Activated CD4-positive, alpha-beta memory T cell treated with anti-CD3 and anti-CD28 coated beads for 36 hours (primary cell): ENCODE measurements at regions of chr22 and their contacts with region 1.

Region 1: DNA sequence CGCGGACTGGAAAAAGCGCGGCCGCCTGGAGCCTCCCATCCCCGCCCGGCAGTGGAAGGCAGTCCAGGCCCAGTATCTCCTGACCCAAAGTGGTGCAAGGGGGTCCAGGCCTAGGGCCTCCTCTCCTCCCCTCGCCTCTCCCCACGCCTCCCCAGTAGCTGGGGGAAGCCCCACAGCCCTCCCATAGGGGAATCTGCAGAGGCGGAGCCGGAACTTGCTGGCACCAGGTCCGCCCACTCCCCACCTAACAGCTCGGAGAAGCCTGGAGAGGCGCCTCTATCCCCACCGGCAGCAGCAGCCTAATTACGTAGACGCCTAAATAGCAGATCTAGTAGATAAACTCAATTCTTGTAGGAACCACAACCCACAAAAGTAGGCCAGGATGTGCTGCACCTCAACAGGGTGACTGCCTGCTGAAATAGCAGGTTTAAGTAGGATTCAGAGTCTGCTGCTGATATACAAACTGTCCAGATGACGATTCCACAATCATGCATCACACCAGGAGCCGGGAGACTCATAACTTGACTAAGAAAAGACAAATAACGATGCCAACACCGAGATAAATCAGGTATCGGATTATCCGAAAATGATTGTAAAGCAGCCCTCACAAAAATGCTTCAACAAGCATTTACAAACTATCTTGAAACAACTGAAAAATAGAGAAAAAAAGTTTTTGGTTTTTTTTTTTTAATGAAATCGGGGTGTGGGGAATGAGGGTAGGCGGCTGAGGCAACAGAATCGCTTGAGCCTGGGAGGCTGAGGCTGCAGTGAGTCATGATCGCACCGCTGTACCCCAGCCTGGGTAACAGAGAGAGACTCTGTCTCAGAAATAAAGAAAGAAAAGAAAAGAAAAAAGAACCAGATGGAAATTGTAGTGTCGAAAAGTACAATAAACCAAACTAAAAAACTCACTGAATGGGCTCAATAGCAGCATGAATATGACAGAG is 11.4 kb upstream of the BRD1 start:
- DNase-seq: peak; percentile 93
- H3K4me3 Mint-ChIP-seq: peak overlapping the region; percentile 65
- H3K27ac Mint-ChIP-seq: peak overlapping the region; percentile 94
- H3K4me1 Mint-ChIP-seq: peaks cover 36% of the 10 kb centered on the region
- H3K27me3 Mint-ChIP-seq: no peaks in the 10 kb centered on the region

Region 2: GRCh38 chr22:49767355-49768062 is 71.5 kb before region 1 on chr22:
- CTCF ChIA-PET with region 1: no interaction called
- POLR2A ChIA-PET with region 1: no interaction called
- intact Hi-C with region 1: no loop called
- DNase-seq: peak; percentile 53
- H3K4me3 Mint-ChIP-seq: no peak overlapping the region
- H3K27ac Mint-ChIP-seq: peak overlapping the region; percentile 2
- H3K4me1 Mint-ChIP-seq: peaks cover 9% of the 10 kb centered on the region
- H3K27me3 Mint-ChIP-seq: no peaks in the 10 kb centered on the region

Region 3: GRCh38 chr22:49815641-49816071 is 23.4 kb before region 1 on chr22:
- CTCF ChIA-PET with region 1: interaction called, 3 read pairs
- POLR2A ChIA-PET with region 1: no interaction called
- intact Hi-C with region 1: loop called (anchors 2 kb)
- DNase-seq: peak; percentile 62
- H3K4me3 Mint-ChIP-seq: peak overlapping the region; percentile 26
- H3K27ac Mint-ChIP-seq: peak overlapping the region; percentile 54
- H3K4me1 Mint-ChIP-seq: peaks cover 71% of the 10 kb centered on the region
- H3K27me3 Mint-ChIP-seq: no peaks in the 10 kb centered on the region

Region 4: GRCh38 chr22:49852898-49853894 is 14.2 kb after region 1 on chr22 and contains the start of gene ZBED4:
- CTCF ChIA-PET with region 1: no interaction called
- POLR2A ChIA-PET with region 1: interaction called, 9 read pairs
- intact Hi-C with region 1: loop called (anchors 1 kb)
- DNase-seq: peak; percentile 99
- H3K4me3 Mint-ChIP-seq: peak within 1 kb of the TSS; percentile 86
- H3K27ac Mint-ChIP-seq: peak within 1 kb of the TSS; percentile 80
- H3K4me1 Mint-ChIP-seq: peaks cover 36% of the 10 kb centered on the region
- H3K27me3 Mint-ChIP-seq: peaks cover 3% of the 10 kb centered on the region
- total RNA-seq, gene ZBED4: 18.4 TPM

Region 5: DNA sequence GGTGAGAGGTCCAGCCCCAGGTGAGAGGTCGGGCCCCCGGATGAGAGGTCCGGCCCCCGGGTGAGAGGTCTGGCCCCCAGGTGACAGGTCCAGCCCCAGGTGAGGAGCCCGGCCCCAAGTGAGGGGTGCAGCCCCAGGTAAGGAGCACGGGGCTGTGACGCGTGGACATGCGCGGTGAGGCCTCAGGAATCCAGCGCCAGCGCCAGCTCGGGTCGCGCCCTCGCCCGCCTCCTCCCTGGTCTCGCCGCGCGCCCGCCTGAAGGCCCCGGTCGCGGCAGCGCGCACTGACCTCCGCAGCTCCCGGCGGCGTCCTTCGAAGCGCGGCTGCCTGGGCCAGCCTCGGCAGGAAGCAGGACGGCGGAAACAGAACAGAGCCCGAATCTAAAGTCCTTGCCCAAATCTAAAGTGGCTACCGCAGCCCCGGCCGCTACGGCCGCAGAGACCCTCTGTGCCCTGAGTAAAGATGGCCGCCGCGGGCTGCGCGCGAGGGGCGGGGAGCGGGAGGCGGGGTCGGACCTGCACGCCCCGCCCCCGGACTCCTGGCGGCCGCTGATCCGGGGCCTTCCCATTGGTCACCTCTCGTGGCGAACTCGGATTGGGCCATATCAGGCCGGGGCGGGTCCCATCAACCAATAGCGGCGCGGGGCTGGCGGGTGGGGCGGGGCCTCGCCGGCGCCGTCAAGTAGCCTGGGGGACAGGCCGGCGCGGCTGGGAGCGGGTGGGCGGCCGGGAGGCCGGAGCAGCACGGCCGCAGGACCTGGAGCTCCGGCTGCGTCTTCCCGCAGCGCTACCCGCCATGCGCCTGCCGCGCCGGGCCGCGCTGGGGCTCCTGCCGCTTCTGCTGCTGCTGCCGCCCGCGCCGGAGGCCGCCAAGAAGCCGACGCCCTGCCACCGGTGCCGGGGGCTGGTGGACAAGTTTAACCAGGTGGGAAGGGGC is 79.2 kb after region 1 on chr22 and contains the starts of genes ALG12 and CRELD2:
- CTCF ChIA-PET with region 1: no interaction called
- POLR2A ChIA-PET with region 1: no interaction called
- intact Hi-C with region 1: loop called (anchors 5 kb)
- DNase-seq: peak; percentile 98
- H3K4me3 Mint-ChIP-seq: peak within 1 kb of the TSS; percentile 79
- H3K27ac Mint-ChIP-seq: peak within 1 kb of the TSS; percentile 79
- H3K4me1 Mint-ChIP-seq: peaks cover 25% of the 10 kb centered on the region
- H3K27me3 Mint-ChIP-seq: no peaks in the 10 kb centered on the region
- total RNA-seq, gene ALG12: 12.4 to 13.8 TPM
- total RNA-seq, gene CRELD2: 29.8 to 30.7 TPM

Region 6: GRCh38 chr22:49951000-49951677 is 112.1 kb after region 1 on chr22:
- CTCF ChIA-PET with region 1: no interaction called
- POLR2A ChIA-PET with region 1: no interaction called
- intact Hi-C with region 1: no loop called
- DNase-seq: no peak
- H3K4me3 Mint-ChIP-seq: no peak overlapping the region
- H3K27ac Mint-ChIP-seq: no peak overlapping the region
- H3K4me1 Mint-ChIP-seq: peaks cover 5% of the 10 kb centered on the region
- H3K27me3 Mint-ChIP-seq: no peaks in the 10 kb centered on the region

Region 7: DNA sequence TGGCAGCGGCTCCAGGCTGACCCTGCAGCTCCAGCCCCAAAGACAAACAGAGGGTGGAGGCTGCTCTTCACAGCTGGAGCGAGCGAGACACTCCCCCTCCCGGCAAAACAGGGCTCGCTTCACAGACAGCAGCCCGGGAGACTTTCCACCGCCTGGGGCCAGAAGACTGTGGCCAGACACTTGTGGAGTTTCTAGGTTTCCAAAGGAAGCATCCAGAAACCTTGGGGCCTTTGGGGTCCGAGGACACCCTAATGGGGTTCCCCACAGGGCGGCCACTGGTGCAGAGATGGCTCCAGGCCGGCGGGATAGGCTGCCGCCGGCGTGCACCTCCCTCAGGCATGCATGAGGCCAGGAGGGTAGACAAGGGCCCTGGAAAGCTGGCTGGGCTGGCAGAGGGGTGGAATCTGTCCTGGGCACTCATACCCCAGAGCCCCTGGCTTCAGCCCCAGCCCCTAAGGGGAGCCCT is 173.7 kb after region 1 on chr22 and contains the start of gene IL17REL:
- CTCF ChIA-PET with region 1: no interaction called
- POLR2A ChIA-PET with region 1: no interaction called
- intact Hi-C with region 1: loop called (anchors 5 kb)
- DNase-seq: no peak
- H3K4me3 Mint-ChIP-seq: peak within 1 kb of the TSS; percentile 68
- H3K27ac Mint-ChIP-seq: peak within 1 kb of the TSS; percentile 62
- H3K4me1 Mint-ChIP-seq: peaks cover 18% of the 10 kb centered on the region
- H3K27me3 Mint-ChIP-seq: peaks cover 3% of the 10 kb centered on the region
- total RNA-seq, gene IL17REL: 0.73 to 1.1 TPM

Region 8: GRCh38 chr22:50089682-50090411 is 250.8 kb after region 1 on chr22 and contains the start of gene MOV10L1:
- CTCF ChIA-PET with region 1: no interaction called
- POLR2A ChIA-PET with region 1: no interaction called
- intact Hi-C with region 1: no loop called
- DNase-seq: peak; percentile 22
- H3K4me3 Mint-ChIP-seq: no peak within 1 kb of the TSS
- H3K27ac Mint-ChIP-seq: no peak within 1 kb of the TSS
- H3K4me1 Mint-ChIP-seq: peaks cover 9% of the 10 kb centered on the region
- H3K27me3 Mint-ChIP-seq: peaks cover 19% of the 10 kb centered on the region
- total RNA-seq, gene MOV10L1: not detected